ENCODE measurements at regions of chr15 and their contacts with region 1.

Region 1: DNA sequence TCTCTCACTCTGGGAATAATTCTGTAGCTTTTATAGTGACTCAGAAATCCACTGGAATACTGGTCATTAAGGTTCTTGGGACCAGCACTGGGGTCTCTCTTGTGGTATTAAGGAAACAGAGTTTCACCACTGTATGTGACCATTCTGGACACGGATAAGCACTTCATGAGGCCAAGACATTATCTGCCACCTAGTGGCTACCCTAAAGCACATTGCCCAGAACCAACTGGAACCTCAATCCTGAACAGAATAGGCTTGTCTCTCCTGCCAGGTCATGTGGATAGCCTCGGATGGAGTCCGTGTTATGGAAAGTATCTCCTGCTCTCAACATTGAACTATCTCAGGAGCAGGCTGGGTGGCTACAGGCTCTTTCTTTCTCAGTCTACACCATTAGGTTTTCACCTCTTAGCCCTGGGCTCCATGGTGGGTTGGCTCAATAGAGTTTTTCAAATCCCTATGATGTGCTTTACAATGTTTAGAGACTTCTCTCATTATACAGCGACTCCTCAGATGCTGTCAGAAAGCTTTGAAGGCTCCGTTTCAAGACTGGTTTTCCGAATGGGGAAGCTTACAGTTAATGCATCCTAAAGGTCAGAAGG is 167.6 kb upstream of the ST8SIA2 start:
- DNase-seq: peak in 1 of 4 donors; percentile 28
- ATAC-seq: peak; percentile 74
- H3K4me3 ChIP-seq: no peak overlapping the region
- H3K27ac ChIP-seq: no peak overlapping the region
- H3K4me1 ChIP-seq: no peaks in the 10 kb centered on the region
- H3K27me3 ChIP-seq: no peaks in the 10 kb centered on the region
- CTCF ChIP-seq: peak; percentile 28 to 30

Region 2: DNA sequence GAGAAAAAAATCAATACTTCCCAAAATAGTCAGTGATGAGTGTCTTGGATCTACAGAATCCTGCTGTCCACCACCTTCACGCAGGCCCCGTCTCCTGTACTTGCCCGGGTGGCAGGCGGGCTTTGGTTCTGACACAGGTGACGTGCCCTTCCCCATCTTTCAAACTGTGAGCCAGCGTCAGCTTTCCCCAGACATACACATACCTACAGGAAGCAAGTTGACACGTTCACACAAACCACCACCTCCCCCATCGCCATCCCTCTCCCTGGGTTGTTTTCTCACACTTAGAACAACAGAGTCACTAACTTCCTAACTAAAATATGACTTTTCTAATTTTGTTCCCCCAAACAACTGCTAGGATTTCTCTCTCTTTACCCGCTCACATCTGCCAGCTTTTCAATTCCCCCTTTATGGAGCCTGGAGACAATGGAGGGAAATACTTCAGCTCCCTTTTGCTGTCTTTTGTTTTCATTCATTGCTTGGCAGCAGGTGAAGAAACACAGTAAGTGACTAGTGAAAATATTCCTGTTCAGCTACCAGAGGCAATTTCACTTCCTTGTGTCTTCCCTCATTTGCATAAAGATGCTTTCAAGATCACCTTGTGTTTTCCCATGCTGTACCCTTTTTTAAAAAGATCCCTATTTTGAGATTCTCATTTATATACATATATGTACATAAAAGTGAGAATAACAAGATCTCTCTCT is 124.3 kb before region 1 on chr15:
- intact Hi-C with region 1: loop called in 1 of 2 experiments (anchors 10 kb)
- DNase-seq: no peak
- ATAC-seq: no peak
- H3K4me3 ChIP-seq: no peak overlapping the region
- H3K27ac ChIP-seq: no peak overlapping the region
- H3K4me1 ChIP-seq: peaks cover 3 to 6% of the 10 kb centered on the region in 2 donors
- H3K27me3 ChIP-seq: no peaks in the 10 kb centered on the region
- CTCF ChIP-seq: no peak

Region 3: GRCh38 chr15:92365067-92365466 is 139.0 kb after region 1 on chr15:
- intact Hi-C with region 1: no loop called
- DNase-seq: peak in 1 of 4 donors; percentile 48
- ATAC-seq: peak; percentile 85
- H3K4me3 ChIP-seq: no peak overlapping the region
- H3K27ac ChIP-seq: no peak overlapping the region
- H3K4me1 ChIP-seq: no peaks in the 10 kb centered on the region
- H3K27me3 ChIP-seq: no peaks in the 10 kb centered on the region
- CTCF ChIP-seq: no peak

Measured in left lung (tissue), 14 donors.